ENCODE measurements at regions of chr12 and their contacts with region 1.

Region 1: GRCh38 chr12:110600254-110600653 is 13.7 kb upstream of the TCTN1 start:
- DNase-seq: peak in 4 of 5 donors; percentile 51 to 56 (median 54)
- H3K4me3 ChIP-seq: no peak overlapping the region
- H3K4me3 Mint-ChIP-seq: no peak overlapping the region
- H3K27ac ChIP-seq: no peak overlapping the region
- H3K27ac Mint-ChIP-seq: peak overlapping the region in 3 of 7 donors; percentile 44 to 83 (median 55)
- H3K4me1 ChIP-seq: peaks cover 1% of the 10 kb centered on the region
- H3K4me1 Mint-ChIP-seq: peaks cover 4 to 11% (median 8%) of the 10 kb centered on the region in 4 donors
- H3K27me3 ChIP-seq: no peaks in the 10 kb centered on the region
- H3K27me3 Mint-ChIP-seq: no peaks in the 10 kb centered on the region

Region 2: GRCh38 chr12:110100315-110100970 is 499.8 kb before region 1 on chr12:
- CTCF ChIA-PET with region 1: interaction called, 11 read pairs
- POLR2A ChIA-PET with region 1: no interaction called
- intact Hi-C with region 1: loop called (anchors 1 kb)
- DNase-seq: peak; percentile 52 to 60 (median 56)
- H3K4me3 ChIP-seq: no peak overlapping the region
- H3K4me3 Mint-ChIP-seq: peak overlapping the region in 2 of 8 donors; percentile 11 to 64
- H3K27ac ChIP-seq: no peak overlapping the region
- H3K27ac Mint-ChIP-seq: peak overlapping the region in 6 of 7 donors; percentile 0 to 43 (median 16)
- H3K4me1 ChIP-seq: peaks cover 6% of the 10 kb centered on the region
- H3K4me1 Mint-ChIP-seq: peaks cover 5 to 8% (median 6%) of the 10 kb centered on the region in 4 donors
- H3K27me3 ChIP-seq: no peaks in the 10 kb centered on the region
- H3K27me3 Mint-ChIP-seq: no peaks in the 10 kb centered on the region

Region 3: DNA sequence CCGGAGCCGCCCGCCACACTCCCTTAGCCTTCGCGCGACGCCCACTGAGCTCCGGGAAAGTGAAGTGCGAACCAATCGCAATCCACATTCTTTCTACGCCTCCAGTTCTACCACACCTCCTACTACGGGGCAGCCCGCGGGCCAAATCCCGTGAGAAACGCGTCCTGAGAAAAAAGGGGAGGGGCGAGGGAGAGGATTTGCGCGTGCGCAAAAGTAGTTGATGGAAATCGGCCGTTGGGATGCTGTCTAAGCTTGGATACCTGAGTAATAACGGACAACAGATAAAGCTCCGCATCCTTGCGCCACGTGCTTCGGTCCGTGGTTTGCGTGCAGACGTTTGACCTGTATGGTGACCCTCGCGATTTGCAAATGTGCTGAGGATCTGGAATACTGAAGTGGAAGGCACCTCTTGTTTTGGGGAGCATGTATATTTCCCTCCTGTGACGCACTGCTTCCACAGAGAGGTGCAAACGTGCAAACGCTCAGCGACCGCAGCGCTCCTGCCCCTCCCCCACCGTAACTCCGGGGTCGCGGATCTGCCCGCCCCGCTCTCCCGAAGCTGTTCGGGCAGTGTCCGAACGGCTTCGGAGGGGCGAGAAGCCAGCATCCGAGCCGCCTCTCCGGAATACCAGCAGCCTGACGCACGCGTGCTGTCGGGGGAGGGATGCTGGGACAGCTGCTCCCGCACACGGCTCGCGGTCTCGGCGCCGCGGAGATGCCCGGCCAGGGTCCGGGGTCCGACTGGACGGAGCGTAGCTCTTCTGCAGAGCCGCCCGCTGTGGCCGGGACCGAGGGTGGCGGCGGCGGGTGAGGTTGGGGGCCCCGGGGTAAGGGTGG is 131.8 kb before region 1 on chr12 and contains the starts of genes FAM216A and GPN3:
- CTCF ChIA-PET with region 1: interaction called, 102 read pairs
- POLR2A ChIA-PET with region 1: interaction called, 25 read pairs
- intact Hi-C with region 1: loop called (anchors 1 kb)
- DNase-seq: peak; percentile 97 to 98 (median 98)
- H3K4me3 ChIP-seq: peak within 1 kb of the TSS; percentile 93 to 97
- H3K4me3 Mint-ChIP-seq: peak within 1 kb of the TSS; percentile 96 to 100 (median 98)
- H3K27ac ChIP-seq: peak within 1 kb of the TSS; percentile 75
- H3K27ac Mint-ChIP-seq: peak within 1 kb of the TSS; percentile 91 to 98 (median 96)
- H3K4me1 ChIP-seq: peaks cover 25% of the 10 kb centered on the region
- H3K4me1 Mint-ChIP-seq: peaks cover 17 to 45% (median 34%) of the 10 kb centered on the region in 4 donors
- H3K27me3 ChIP-seq: no peaks in the 10 kb centered on the region
- H3K27me3 Mint-ChIP-seq: no peaks in the 10 kb centered on the region
- total RNA-seq, gene FAM216A: 16.4 to 16.9 TPM
- total RNA-seq, gene GPN3: 12.5 to 16.6 TPM

Region 4: DNA sequence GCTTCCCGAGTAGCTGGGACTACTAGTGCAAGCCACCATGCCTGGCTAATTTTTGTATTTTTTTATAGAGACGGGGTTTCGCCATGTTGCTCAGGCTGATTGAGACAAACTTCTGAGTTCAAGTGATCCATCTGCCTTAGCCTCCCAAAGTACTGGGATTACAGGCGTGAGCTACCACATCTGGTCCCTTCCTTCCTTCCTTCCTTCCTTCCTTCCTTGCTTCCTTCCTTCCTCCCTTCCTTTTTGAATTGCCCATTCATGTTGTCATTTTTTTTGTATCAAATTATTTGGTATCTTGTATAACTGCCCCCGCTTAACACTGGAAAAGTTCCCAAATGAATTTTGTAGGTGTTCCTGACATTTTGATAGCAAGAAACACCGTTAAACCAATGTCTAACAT is 86.4 kb before region 1 on chr12:
- CTCF ChIA-PET with region 1: interaction called, 157 read pairs
- POLR2A ChIA-PET with region 1: interaction called, 7 read pairs
- intact Hi-C with region 1: loop called (anchors 1 kb)
- DNase-seq: no peak
- H3K4me3 ChIP-seq: no peak overlapping the region
- H3K4me3 Mint-ChIP-seq: no peak overlapping the region
- H3K27ac ChIP-seq: no peak overlapping the region
- H3K27ac Mint-ChIP-seq: no peak overlapping the region
- H3K4me1 ChIP-seq: no peaks in the 10 kb centered on the region
- H3K4me1 Mint-ChIP-seq: peaks cover 0 to 1% (median 0%) of the 10 kb centered on the region in 4 donors
- H3K27me3 ChIP-seq: no peaks in the 10 kb centered on the region
- H3K27me3 Mint-ChIP-seq: no peaks in the 10 kb centered on the region

Region 5: DNA sequence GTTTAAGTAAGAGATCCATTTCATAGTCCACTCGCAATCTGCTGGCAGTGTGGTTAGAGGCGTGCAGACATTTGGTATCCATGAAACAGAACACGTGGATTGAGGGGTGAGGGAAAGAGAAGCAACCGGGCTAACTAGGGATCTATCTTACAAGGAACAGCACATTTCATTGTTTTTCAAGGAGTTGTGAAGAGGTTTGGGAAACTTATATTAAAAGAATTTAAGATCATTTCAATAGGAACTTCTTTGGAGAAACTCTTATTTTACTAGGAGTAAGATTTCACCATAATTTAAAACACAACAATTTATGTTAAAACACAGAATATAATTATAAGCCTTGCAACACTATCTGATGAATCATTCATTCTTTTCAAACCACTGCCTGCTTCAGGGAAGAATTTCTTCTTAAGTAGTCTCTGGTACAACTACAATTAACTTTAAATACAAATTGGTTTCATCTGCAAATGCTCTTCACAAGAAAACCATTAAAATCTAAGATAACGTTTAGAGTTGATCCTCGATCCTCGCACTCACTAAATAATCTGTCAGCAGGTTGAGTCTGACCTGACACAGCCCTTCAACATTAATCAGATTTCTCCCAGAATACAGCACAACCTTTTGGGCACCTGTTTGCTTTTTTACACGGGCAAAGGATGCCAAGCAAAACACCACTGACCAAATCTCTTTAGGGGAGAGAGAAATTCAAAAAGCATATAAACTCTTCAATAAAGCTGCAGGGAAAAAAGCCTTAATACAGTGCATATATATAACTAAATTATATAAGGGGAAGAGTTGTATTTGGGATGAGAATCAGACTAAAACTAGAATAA is 44.5 kb before region 1 on chr12:
- CTCF ChIA-PET with region 1: interaction called, 282 read pairs
- POLR2A ChIA-PET with region 1: interaction called, 34 read pairs
- intact Hi-C with region 1: loop called (anchors 1 kb)
- DNase-seq: no peak
- H3K4me3 ChIP-seq: no peak overlapping the region
- H3K4me3 Mint-ChIP-seq: peak overlapping the region in 1 of 8 donors; percentile 3
- H3K27ac ChIP-seq: no peak overlapping the region
- H3K27ac Mint-ChIP-seq: peak overlapping the region in 4 of 7 donors; percentile 17 to 71 (median 25)
- H3K4me1 ChIP-seq: peaks cover 44% of the 10 kb centered on the region
- H3K4me1 Mint-ChIP-seq: peaks cover 35 to 62% (median 51%) of the 10 kb centered on the region in 4 donors
- H3K27me3 ChIP-seq: no peaks in the 10 kb centered on the region
- H3K27me3 Mint-ChIP-seq: no peaks in the 10 kb centered on the region

Region 6: DNA sequence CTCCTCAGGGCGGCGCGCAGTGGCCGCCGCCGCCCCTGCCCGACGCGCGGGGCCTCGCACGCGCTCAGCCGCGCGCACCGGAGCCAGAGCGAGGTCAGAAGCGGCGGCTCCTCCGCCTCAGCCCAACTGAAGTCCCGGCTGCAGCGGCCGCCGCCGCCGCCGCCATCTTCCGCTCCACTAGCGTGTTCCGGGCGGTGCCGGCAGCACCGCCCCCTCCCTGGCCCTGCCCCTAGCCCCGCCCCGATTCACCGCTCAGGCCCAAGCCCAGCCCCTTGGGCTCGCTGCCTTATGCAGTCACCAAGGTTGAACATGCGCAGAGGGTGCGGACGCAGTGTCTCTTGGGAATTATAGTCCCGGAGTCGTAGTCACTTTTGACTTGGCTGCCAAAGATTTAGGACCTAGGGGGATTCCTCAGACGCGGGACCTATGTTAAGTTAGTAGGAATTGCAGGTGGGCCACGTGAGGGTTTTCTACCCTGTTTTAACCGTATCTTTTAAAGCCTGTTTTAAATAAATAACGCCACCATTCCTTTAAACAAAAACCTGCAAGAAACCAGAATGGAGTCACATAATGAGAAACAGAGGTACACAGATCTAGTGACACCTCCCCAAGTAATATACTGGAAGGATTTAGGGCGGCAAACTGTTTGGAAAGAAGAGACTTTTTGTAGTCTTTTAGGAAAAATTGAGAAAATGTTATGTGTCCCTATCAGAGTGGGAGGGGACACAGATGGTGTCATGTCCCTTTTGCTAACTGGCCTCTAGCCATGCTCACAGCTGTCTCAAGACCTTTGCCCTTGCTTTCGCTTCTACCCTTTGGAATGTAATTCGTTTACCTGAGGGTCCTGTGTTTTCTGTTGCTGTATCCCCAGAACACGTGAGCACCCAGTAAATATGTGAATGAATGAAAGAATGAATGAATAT is 16.9 kb before region 1 on chr12 and contains the start of gene PPTC7:
- CTCF ChIA-PET with region 1: interaction called, 107 read pairs
- POLR2A ChIA-PET with region 1: interaction called, 9 read pairs
- intact Hi-C with region 1: loop called (anchors 1 kb)
- DNase-seq: peak; percentile 91 to 97 (median 94)
- H3K4me3 ChIP-seq: peak within 1 kb of the TSS; percentile 77 to 84
- H3K4me3 Mint-ChIP-seq: peak within 1 kb of the TSS; percentile 89 to 98 (median 96)
- H3K27ac ChIP-seq: peak within 1 kb of the TSS; percentile 93
- H3K27ac Mint-ChIP-seq: peak within 1 kb of the TSS; percentile 94 to 97 (median 96)
- H3K4me1 ChIP-seq: peaks cover 62% of the 10 kb centered on the region
- H3K4me1 Mint-ChIP-seq: peaks cover 47 to 73% (median 61%) of the 10 kb centered on the region in 4 donors
- H3K27me3 ChIP-seq: no peaks in the 10 kb centered on the region
- H3K27me3 Mint-ChIP-seq: no peaks in the 10 kb centered on the region
- total RNA-seq, gene PPTC7: 32.6 to 35.6 TPM

Region 7: GRCh38 chr12:110639336-110640141 is 39.3 kb after region 1 on chr12:
- CTCF ChIA-PET with region 1: no interaction called
- POLR2A ChIA-PET with region 1: no interaction called
- intact Hi-C with region 1: no loop called
- DNase-seq: no peak
- H3K4me3 ChIP-seq: no peak overlapping the region
- H3K4me3 Mint-ChIP-seq: no peak overlapping the region
- H3K27ac ChIP-seq: no peak overlapping the region
- H3K27ac Mint-ChIP-seq: no peak overlapping the region
- H3K4me1 ChIP-seq: no peaks in the 10 kb centered on the region
- H3K4me1 Mint-ChIP-seq: peaks cover 0 to 5% (median under 1%) of the 10 kb centered on the region in 4 donors
- H3K27me3 ChIP-seq: no peaks in the 10 kb centered on the region
- H3K27me3 Mint-ChIP-seq: no peaks in the 10 kb centered on the region

Region 8: DNA sequence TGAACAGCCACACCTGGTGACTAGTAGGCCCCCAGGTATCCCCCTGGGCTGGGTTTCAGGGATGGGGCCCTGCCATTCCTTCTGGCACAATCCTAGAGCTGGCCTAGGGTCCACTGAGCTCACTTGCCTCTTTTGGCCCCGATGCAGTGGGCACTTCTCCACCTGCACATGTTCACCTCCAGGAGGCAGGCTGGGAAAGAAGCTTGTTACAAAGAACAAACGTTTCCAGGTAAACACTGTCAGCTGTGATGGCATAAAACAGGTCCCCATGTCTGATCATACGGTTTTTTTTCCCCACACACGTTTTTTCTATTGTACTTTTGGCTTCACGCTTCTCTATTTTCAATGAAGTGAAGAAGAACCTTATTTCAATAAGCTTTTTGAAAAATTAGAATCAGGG is 104.5 kb after region 1 on chr12:
- CTCF ChIA-PET with region 1: interaction called, 10 read pairs
- POLR2A ChIA-PET with region 1: no interaction called
- intact Hi-C with region 1: no loop called
- DNase-seq: peak in 3 of 5 donors; percentile 13 to 25 (median 16)
- H3K4me3 ChIP-seq: no peak overlapping the region
- H3K4me3 Mint-ChIP-seq: no peak overlapping the region
- H3K27ac ChIP-seq: no peak overlapping the region
- H3K27ac Mint-ChIP-seq: no peak overlapping the region
- H3K4me1 ChIP-seq: no peaks in the 10 kb centered on the region
- H3K4me1 Mint-ChIP-seq: peaks cover 0 to 2% (median 0%) of the 10 kb centered on the region in 4 donors
- H3K27me3 ChIP-seq: no peaks in the 10 kb centered on the region
- H3K27me3 Mint-ChIP-seq: no peaks in the 10 kb centered on the region

Measured in CD4-positive, alpha-beta memory T cell (primary cell).